Activated CD8-positive, alpha-beta T cell treated with anti-CD3 and anti-CD28 coated beads for 36 hours (primary cell): ENCODE measurements at regions of chr2 and their contacts with region 1.

Region 1: GRCh38 chr2:74250189-74250631 is 51.8 kb downstream of the MTHFD2 start:
- DNase-seq: peak; percentile 65
- ATAC-seq: peak; percentile 78
- H3K4me3 Mint-ChIP-seq: no peak overlapping the region
- H3K27ac Mint-ChIP-seq: no peak overlapping the region
- H3K4me1 Mint-ChIP-seq: no peaks in the 10 kb centered on the region
- H3K27me3 Mint-ChIP-seq: no peaks in the 10 kb centered on the region
- CTCF ChIP-seq: peak; percentile 89

Region 2: GRCh38 chr2:74238879-74239278 is 11.3 kb before region 1 on chr2:
- CTCF ChIA-PET with region 1: interaction called, 14 read pairs
- POLR2A ChIA-PET with region 1: no interaction called
- intact Hi-C with region 1: no loop called
- DNase-seq: no peak
- ATAC-seq: no peak
- H3K4me3 Mint-ChIP-seq: no peak overlapping the region
- H3K27ac Mint-ChIP-seq: no peak overlapping the region
- H3K4me1 Mint-ChIP-seq: peaks cover 3% of the 10 kb centered on the region
- H3K27me3 Mint-ChIP-seq: no peaks in the 10 kb centered on the region
- CTCF ChIP-seq: no peak

Region 3: GRCh38 chr2:74267068-74267467 is 16.9 kb after region 1 on chr2:
- CTCF ChIA-PET with region 1: interaction called, 15 read pairs
- POLR2A ChIA-PET with region 1: no interaction called
- intact Hi-C with region 1: no loop called
- DNase-seq: peak; percentile 83
- ATAC-seq: peak; percentile 99
- H3K4me3 Mint-ChIP-seq: no peak overlapping the region
- H3K27ac Mint-ChIP-seq: peak overlapping the region; percentile 80
- H3K4me1 Mint-ChIP-seq: peaks cover 12% of the 10 kb centered on the region
- H3K27me3 Mint-ChIP-seq: no peaks in the 10 kb centered on the region
- CTCF ChIP-seq: peak; percentile 64

Region 4: GRCh38 chr2:74304332-74305148 is 54.3 kb after region 1 on chr2:
- CTCF ChIA-PET with region 1: interaction called, 12 read pairs
- POLR2A ChIA-PET with region 1: no interaction called
- intact Hi-C with region 1: no loop called
- DNase-seq: peak; percentile 29
- ATAC-seq: peak; percentile 88
- H3K4me3 Mint-ChIP-seq: no peak overlapping the region
- H3K27ac Mint-ChIP-seq: no peak overlapping the region
- H3K4me1 Mint-ChIP-seq: peaks cover 7% of the 10 kb centered on the region
- H3K27me3 Mint-ChIP-seq: no peaks in the 10 kb centered on the region
- CTCF ChIP-seq: no peak

Region 5: GRCh38 chr2:74391580-74392448 is 141.6 kb after region 1 on chr2:
- CTCF ChIA-PET with region 1: interaction called, 24 read pairs
- POLR2A ChIA-PET with region 1: no interaction called
- intact Hi-C with region 1: loop called (anchors 10 kb)
- DNase-seq: peak; percentile 95
- ATAC-seq: peak; percentile 92
- H3K4me3 Mint-ChIP-seq: peak overlapping the region; percentile 86
- H3K27ac Mint-ChIP-seq: peak overlapping the region; percentile 99
- H3K4me1 Mint-ChIP-seq: peaks cover 2% of the 10 kb centered on the region
- H3K27me3 Mint-ChIP-seq: no peaks in the 10 kb centered on the region
- CTCF ChIP-seq: peak; percentile 96

Region 6: DNA sequence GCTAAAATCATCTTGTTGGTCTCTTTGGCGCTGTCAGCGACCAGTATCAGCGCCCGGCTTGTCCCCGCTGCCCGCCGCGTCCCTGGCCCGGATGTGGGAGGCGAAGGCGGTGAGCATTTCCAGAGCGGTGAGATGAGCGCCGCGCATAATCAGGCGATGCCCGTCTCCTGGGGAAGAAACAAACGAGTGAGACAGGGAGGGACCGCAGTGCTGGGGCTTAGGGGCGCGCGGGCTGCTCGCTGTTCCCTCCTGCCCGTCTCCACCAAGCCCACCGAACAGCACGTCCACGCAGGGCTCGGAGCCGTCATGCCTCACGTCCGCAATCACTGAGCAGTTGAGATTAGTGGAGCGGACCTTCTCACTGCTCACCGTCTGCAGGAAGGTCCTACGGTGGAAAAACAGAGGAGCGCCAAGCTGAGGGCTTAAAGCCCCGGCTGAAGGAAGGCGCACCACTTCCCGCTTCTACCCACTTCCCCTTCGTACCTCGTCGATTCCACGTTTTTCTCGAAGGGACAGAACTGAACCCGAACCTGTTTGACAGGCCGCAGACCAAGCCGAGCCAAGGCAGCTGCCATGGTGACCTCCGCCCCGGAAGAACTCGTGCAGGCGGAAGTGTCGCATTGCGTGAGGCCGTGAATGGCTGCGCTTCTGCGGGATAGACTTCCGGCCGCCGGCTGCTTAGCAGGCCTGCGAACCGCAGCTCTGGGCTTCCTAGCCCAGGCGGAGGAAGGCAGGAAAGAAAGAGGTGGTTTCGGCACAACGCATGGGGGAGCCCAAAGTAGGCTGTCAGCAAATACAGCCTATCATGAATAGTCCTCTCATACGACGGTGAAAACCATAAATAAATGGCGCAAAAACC is 222.1 kb after region 1 on chr2 and contains the start of gene MRPL53:
- CTCF ChIA-PET with region 1: no interaction called
- POLR2A ChIA-PET with region 1: no interaction called
- intact Hi-C with region 1: no loop called
- DNase-seq: peak; percentile 96
- ATAC-seq: peak; percentile 92
- H3K4me3 Mint-ChIP-seq: peak within 1 kb of the TSS; percentile 95
- H3K27ac Mint-ChIP-seq: peak within 1 kb of the TSS; percentile 93
- H3K4me1 Mint-ChIP-seq: peaks cover 16% of the 10 kb centered on the region
- H3K27me3 Mint-ChIP-seq: no peaks in the 10 kb centered on the region
- CTCF ChIP-seq: no peak
- total RNA-seq, gene MRPL53: 111 to 113 TPM